Caco-2 (cell line): ENCODE measurements at regions of chr5 and their contacts with region 1.

Region 1: DNA sequence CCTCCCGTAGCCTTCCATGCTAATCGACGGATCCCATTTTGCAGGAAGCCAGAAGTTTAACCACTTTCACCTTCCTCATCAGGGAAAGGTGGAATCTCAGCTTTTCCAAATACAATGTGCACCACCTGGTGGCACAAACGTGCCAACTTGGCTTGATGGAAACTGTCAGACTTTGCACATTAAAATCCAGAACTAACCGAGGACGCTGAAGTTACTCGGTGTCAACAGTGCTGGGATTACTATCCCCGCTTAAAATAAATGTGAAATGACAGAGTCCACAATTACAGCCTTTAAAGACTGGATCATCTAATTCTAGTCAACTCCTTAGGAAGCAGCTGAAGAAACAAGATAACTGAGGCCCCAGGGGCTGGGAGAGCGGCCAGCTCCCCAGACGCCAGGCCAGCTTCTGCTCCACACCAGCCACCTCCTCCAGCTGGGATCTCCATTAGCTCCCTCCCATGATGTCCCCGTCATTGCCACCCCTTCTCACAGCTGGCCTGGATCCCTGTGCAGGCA is 50.1 kb upstream of the RETREG1 start:
- DNase-seq: peak in 1 of 2 experiments; percentile 50
- H3K4me3 ChIP-seq: no peak overlapping the region
- H3K4me3 Mint-ChIP-seq: no peak overlapping the region
- H3K27ac Mint-ChIP-seq: peak overlapping the region; percentile 7
- H3K4me1 ChIP-seq: 0 out of 2 replicates have a peak, but pooled peaks cover 3% of the 10 kb centered on the region
- H3K4me1 Mint-ChIP-seq: no peaks in the 10 kb centered on the region
- H3K27me3 ChIP-seq: no peaks in the 10 kb centered on the region
- H3K27me3 Mint-ChIP-seq: no peaks in the 10 kb centered on the region
- CTCF ChIP-seq: peak; percentile 60 to 66

Region 2: GRCh38 chr5:16160706-16161105 is 506.2 kb before region 1 on chr5:
- CTCF ChIA-PET with region 1: no interaction called
- POLR2A ChIA-PET with region 1: no interaction called
- intact Hi-C with region 1: loop called (anchors 2 kb)
- DNase-seq: peak; percentile 47 to 61
- H3K4me3 ChIP-seq: no peak overlapping the region
- H3K4me3 Mint-ChIP-seq: no peak overlapping the region
- H3K27ac Mint-ChIP-seq: no peak overlapping the region
- H3K4me1 ChIP-seq: no peaks in the 10 kb centered on the region
- H3K4me1 Mint-ChIP-seq: no peaks in the 10 kb centered on the region
- H3K27me3 ChIP-seq: no peaks in the 10 kb centered on the region
- H3K27me3 Mint-ChIP-seq: peaks cover 7% of the 10 kb centered on the region
- CTCF ChIP-seq: peak; percentile 67 to 79

Region 3: DNA sequence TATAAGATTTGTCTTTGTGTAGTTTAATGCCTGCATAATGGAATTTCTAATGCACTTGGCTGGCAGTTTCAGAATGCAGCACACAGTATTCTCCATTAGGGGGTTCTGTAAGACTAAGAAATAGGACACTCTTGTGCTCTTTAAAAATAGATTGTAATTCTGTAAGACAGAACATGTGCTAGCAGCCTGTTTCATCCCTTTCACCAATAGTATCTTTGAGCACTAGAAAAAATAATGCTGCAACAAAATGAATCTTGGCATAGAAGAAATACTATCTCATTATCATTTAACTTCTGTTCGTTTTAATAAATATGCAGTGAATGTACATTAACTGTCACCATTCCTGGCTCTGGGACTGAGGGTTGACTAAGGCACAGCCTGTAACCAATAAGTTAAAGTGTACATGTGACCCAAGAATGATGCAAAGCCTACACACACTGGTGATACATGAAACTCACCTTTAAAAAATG is 177.6 kb before region 1 on chr5:
- CTCF ChIA-PET with region 1: no interaction called
- POLR2A ChIA-PET with region 1: no interaction called
- intact Hi-C with region 1: loop called (anchors 1 kb)
- DNase-seq: peak in 1 of 2 experiments; percentile 48
- H3K4me3 ChIP-seq: no peak overlapping the region
- H3K4me3 Mint-ChIP-seq: no peak overlapping the region
- H3K27ac Mint-ChIP-seq: peak overlapping the region; percentile 54
- H3K4me1 ChIP-seq: peaks cover 52% of the 10 kb centered on the region
- H3K4me1 Mint-ChIP-seq: peaks cover 31% of the 10 kb centered on the region
- H3K27me3 ChIP-seq: no peaks in the 10 kb centered on the region
- H3K27me3 Mint-ChIP-seq: no peaks in the 10 kb centered on the region
- CTCF ChIP-seq: peak; percentile 75 to 79

Region 4: GRCh38 chr5:16616536-16617273 is 50.2 kb before region 1 on chr5 and contains the start of gene RETREG1:
- CTCF ChIA-PET with region 1: no interaction called
- POLR2A ChIA-PET with region 1: no interaction called
- intact Hi-C with region 1: loop called (anchors 5 kb)
- DNase-seq: peak; percentile 51 to 79
- H3K4me3 ChIP-seq: peak within 1 kb of the TSS; percentile 84
- H3K4me3 Mint-ChIP-seq: no peak within 1 kb of the TSS
- H3K27ac Mint-ChIP-seq: peak within 1 kb of the TSS; percentile 43
- H3K4me1 ChIP-seq: no peaks in the 10 kb centered on the region
- H3K4me1 Mint-ChIP-seq: no peaks in the 10 kb centered on the region
- H3K27me3 ChIP-seq: no peaks in the 10 kb centered on the region
- H3K27me3 Mint-ChIP-seq: no peaks in the 10 kb centered on the region
- CTCF ChIP-seq: no peak
- total RNA-seq, gene RETREG1: 14.1 and 15.1 TPM in 2 replicates